ENCODE measurements at regions of chr7 and their contacts with region 1.

Region 1: DNA sequence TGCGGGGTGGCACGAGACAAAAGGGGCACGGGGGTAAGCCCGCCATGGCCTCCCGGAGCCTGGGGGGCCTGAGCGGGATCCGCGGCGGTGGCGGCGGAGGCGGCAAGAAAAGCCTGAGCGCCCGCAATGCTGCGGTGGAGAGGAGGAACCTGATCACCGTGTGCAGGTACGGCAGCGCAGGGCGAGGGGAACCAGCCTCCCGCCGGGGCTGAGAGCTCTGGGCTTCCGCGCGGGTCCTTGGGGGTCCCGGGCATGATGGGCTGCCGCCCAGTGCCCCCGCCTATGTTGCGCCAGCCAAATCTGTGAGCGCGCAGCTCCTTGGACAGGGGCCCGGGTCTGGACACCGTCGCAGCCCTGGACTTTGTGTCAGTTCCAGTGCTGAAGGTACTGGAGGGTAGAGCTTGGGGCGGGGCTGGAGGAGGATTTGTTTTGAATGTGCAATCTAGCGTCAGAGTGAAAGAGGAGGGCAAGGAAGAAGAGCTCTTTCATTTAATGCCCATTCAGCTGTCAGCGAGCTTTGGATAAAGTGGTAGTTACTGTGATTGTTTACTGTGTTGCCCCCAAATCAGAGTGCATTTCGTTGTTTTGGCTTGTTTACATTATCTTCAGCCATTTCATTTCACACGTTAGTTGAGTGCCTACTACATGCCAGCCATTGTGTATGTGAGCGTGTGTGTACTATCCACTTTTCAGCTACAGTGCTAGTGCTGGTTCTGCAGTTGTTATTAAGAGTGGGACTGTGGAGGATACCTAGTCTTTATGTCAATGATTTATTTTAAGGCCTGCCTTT is 777 bp downstream of the RUNDC3B start:
- DNase-seq: peak; percentile 68
- ATAC-seq: peak; percentile 40
- H3K4me3 Mint-ChIP-seq: peak overlapping the region; percentile 74
- H3K27ac Mint-ChIP-seq: no peak overlapping the region
- H3K4me1 Mint-ChIP-seq: peaks cover 10% of the 10 kb centered on the region
- H3K27me3 Mint-ChIP-seq: peaks cover 10% of the 10 kb centered on the region

Region 2: DNA sequence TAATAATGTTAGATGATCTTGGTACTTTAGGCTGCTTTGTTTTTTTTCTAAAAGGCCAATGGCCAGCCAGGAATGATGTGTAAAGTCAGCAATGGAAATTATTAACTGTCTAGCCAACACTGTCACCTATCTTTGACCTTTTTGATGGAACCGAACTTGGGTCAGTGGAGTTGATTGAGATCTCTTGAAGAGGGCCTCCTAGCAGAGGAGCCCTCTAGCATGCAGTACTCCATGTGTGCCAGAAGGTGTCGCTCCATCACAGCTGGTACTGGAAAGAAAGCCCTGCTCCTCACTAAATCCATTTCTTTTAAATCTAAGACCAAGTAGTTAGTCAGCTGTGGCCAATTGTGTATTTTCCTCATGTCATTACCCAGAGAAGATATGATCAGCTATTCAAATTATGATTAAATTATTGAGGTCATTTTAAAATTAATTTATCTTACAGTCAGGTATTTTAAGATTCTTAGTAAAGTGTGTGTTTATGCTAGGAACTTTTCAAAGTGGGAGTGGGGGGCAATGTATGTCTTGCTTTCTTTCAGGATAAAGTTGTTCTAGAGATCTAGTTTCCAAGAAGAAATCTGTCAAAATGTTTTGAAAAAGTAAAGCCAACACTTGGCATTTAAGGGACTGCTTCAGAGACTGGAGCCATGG is 316.6 kb before region 1 on chr7:
- CTCF ChIA-PET with region 1: no interaction called
- POLR2A ChIA-PET with region 1: no interaction called
- intact Hi-C with region 1: loop called in 1 of 2 experiments (anchors 10 kb)
- DNase-seq: peak; percentile 76
- ATAC-seq: peak; percentile 86
- H3K4me3 Mint-ChIP-seq: no peak overlapping the region
- H3K27ac Mint-ChIP-seq: no peak overlapping the region
- H3K4me1 Mint-ChIP-seq: peaks cover 11% of the 10 kb centered on the region
- H3K27me3 Mint-ChIP-seq: no peaks in the 10 kb centered on the region

Region 3: DNA sequence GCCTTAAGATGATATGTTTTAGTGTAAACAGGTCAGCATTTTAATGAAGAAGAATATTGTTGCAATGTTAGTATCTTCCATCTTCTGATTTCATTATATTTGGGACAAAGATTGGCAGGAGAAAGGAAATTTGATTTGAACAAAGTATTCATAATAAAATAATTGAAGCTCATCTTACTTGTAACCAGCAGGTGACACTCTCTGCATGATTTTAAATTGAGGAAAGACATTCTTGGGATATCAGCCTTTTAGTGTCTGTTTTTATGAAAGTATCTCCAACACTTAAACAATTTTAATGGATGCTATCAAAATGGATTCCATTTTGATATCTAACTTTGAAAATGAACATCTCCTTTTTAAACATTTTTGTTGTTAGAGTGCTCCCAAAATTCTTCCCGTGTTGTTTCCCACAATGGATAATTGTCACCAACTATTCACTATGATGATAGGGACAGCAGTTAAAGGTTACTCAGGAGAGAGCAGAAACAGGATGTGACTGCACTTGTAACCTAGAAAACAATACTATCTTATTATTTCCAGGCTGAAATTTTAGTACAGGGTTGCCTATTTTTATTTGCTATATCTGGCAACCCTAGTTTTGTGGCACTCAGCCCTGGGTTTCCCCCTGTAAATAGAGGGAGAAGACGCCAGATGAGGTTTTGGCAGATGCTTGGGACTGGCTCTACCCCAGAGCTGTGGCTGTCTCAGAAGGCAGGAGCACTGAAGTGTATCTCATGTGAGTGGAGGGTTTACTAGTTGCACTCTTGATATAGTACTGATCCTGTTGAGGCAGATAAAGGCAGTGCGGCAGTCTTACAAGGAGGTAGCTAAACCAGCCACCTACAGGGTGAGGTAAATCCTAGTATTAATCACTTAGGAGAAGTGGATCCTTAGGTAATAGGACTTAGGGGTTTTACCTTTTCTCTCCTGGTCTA is 122.5 kb before region 1 on chr7:
- CTCF ChIA-PET with region 1: interaction called, 6 read pairs
- POLR2A ChIA-PET with region 1: no interaction called
- intact Hi-C with region 1: loop called in 1 of 2 experiments (anchors 5 kb)
- DNase-seq: no peak
- ATAC-seq: no peak
- H3K4me3 Mint-ChIP-seq: no peak overlapping the region
- H3K27ac Mint-ChIP-seq: no peak overlapping the region
- H3K4me1 Mint-ChIP-seq: no peaks in the 10 kb centered on the region
- H3K27me3 Mint-ChIP-seq: no peaks in the 10 kb centered on the region

Region 4: GRCh38 chr7:87600130-87601124 is 28.5 kb before region 1 on chr7 and contains the start of gene ABCB1:
- CTCF ChIA-PET with region 1: interaction called, 3 read pairs
- POLR2A ChIA-PET with region 1: interaction called, 3 read pairs
- intact Hi-C with region 1: loop called (anchors 1 to 2 kb)
- DNase-seq: peak; percentile 75
- ATAC-seq: peak; percentile 95
- H3K4me3 Mint-ChIP-seq: peak within 1 kb of the TSS; percentile 67
- H3K27ac Mint-ChIP-seq: peak within 1 kb of the TSS; percentile 77
- H3K4me1 Mint-ChIP-seq: peaks cover 20% of the 10 kb centered on the region
- H3K27me3 Mint-ChIP-seq: peaks cover 19% of the 10 kb centered on the region
- total RNA-seq, gene ABCB1: 4.5 to 4.9 TPM

Region 5: DNA sequence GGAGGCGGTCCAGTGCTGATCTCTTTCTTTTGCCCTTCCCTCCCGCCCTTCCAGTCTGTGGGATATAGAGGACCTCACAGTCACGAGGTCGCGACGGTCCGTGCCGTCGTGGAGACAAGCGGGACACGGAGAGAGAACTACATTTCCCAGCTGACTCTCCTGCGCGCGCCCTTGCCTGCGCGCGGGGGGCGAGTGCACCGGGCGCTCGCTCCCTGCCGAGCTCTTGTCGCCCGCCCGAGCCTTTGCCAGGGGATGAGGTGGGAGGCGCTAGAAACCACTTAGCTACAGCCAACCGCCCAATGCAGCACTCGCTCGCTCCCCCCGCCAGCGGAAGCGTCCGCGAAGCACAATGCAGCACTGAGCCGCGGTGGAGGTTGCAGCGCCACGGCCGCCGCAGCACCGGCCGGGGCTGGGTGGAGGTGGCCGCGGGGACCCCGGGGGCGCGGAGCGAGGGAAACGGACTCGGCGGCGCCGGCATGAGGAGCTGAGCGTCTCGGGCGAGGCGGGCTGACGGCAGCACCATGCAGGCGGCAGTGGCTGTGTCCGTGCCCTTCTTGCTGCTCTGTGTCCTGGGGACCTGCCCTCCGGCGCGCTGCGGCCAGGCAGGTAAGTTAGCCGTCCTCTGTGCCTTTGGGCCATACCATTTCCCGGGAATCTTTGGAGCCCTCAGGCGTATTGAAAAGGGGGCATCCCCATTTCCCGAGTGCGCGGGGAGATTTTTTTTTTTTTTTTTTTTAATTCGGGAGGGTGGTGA is 305.1 kb after region 1 on chr7 and contains the start of gene ADAM22:
- CTCF ChIA-PET with region 1: no interaction called
- POLR2A ChIA-PET with region 1: no interaction called
- intact Hi-C with region 1: loop called in 1 of 2 experiments (anchors 10 kb)
- DNase-seq: peak; percentile 89
- ATAC-seq: peak; percentile 98
- H3K4me3 Mint-ChIP-seq: peak within 1 kb of the TSS; percentile 81
- H3K27ac Mint-ChIP-seq: peak within 1 kb of the TSS; percentile 81
- H3K4me1 Mint-ChIP-seq: peaks cover 9% of the 10 kb centered on the region
- H3K27me3 Mint-ChIP-seq: peaks cover 5% of the 10 kb centered on the region
- total RNA-seq, gene ADAM22: 1.1 to 1.8 TPM

Region 6: DNA sequence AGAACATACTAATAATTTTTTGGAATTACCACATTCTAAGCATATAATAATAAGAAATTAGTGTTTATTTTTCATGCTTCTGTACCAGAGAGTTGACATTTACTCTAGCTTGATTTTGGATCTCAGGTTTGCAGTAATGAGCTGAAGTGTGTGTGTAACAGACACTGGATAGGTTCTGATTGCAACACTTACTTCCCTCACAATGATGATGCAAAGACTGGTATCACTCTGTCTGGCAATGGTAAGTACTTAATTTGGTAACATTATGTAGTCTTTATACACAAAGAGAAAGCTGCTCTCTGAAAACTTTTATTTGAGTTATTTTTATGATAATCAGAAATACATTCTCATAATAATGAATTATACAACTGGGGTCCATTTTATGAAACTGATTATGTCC is 536.7 kb after region 1 on chr7:
- CTCF ChIA-PET with region 1: no interaction called
- POLR2A ChIA-PET with region 1: no interaction called
- intact Hi-C with region 1: no loop called
- DNase-seq: no peak
- ATAC-seq: no peak
- H3K4me3 Mint-ChIP-seq: no peak overlapping the region
- H3K27ac Mint-ChIP-seq: no peak overlapping the region
- H3K4me1 Mint-ChIP-seq: no peaks in the 10 kb centered on the region
- H3K27me3 Mint-ChIP-seq: no peaks in the 10 kb centered on the region

Region 7: DNA sequence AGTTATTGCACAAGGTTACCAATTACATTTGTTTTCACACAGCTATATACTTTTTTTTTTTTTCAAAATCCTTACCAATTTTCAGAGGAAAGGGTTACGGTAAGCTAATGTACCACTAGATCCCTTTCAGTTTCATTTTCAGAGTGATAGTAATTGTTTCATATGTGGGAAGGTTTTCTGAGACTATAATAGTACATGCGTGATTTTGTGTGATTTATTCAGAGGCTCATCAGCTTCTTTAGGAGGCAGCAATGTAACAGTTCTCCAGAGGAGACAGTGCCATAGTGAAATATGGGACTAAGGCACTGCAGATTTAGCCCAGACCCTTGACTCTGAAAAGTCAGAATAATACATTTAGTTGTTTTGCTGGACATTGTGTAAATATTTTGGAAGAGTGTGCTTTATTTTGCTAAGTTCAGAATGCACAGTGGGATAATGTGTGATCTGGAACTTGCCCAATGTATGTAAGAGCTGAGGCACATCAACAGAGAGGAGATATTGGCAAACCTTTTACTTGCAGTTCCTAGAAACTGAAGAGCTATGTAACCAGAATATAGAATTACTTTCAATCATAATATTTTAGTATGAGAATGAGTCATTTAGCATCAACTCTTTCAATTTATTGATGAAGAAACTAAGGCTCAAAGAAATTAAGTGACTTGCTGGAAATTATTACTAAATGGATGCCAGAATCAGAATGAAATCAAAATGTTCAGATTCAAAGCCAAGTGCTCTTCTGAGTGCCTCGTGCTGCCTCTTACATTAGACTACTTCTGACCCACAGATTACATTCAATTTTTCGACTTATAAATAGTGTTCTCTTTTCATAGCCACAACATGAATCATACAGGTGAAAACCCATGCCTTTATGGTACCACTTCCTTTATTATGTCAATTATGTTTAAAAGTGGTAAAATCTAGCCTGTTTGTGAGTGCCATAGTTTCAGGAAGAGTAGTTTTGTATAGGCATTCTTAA is 1374.3 kb after region 1 on chr7:
- CTCF ChIA-PET with region 1: no interaction called
- POLR2A ChIA-PET with region 1: no interaction called
- intact Hi-C with region 1: loop called in 1 of 2 experiments (anchors 5 kb)
- DNase-seq: no peak
- ATAC-seq: peak; percentile 87
- H3K4me3 Mint-ChIP-seq: peak overlapping the region; percentile 48
- H3K27ac Mint-ChIP-seq: peak overlapping the region; percentile 83
- H3K4me1 Mint-ChIP-seq: peaks cover 26% of the 10 kb centered on the region
- H3K27me3 Mint-ChIP-seq: peaks cover 5% of the 10 kb centered on the region

Measured in activated CD4-positive, alpha-beta T cell treated with anti-CD3 and anti-CD28 coated beads for 36 hours (primary cell).